ENCODE measurements at regions of chr15 and their contacts with region 1.

Region 1: DNA sequence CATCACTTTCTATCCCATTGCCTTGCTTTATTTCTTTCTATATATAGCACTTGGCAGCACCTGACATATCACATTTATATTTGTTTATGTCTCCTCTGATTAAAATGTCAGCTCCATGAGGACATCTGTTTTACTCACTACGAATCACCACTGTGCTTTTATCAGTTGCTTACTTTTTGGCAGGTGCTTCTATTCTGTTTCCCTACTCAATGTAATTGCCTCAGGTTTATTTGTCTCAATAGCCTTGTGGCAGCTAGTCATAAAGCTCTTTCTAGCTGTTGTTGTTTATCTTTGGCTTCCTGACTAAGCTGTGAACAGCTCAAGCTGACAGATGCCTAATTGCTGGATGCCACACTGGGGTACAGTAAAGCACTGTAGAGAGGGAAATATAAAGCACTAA is 85.5 kb downstream of the VPS13C start:
- DNase-seq: no peak
- ATAC-seq: peak; percentile 79
- H3K4me3 ChIP-seq: no peak overlapping the region
- H3K4me1 ChIP-seq: peaks cover 11% of the 10 kb centered on the region
- CTCF ChIP-seq: no peak

Region 2: DNA sequence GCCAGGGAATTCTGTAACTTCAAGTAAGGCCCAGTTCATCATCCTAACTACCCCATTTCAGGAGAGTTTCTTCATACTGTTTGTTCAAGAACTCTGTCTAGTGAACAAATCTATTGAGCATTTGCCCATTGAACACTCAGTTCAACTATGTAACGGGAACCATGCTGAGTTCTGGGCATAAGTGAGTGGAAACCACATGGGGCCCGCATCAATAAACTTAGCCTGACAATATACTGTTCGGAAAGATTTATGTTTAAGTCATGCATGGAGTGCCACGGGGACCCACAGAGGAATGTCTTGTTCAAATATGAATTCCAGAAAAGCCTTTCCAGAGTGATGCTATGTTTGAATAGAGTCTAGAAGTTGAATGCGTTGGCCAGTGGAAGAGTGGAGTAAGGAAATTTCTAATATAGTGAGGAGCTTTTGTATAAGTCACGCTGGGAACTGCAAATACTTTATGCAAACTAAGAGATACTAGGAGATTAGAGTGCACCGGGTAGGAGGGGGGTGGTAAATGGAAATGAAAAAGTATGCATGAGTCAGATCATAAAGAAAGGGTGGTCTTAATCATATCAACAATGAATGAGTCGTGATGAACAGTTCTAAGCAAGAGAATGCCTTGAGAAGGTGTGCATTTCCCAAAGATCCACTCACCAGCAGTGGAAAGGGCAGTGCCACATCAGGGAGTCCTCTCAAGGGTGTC is 194.3 kb before region 1 on chr15:
- intact Hi-C with region 1: no loop called
- DNase-seq: no peak
- ATAC-seq: no peak
- H3K4me3 ChIP-seq: no peak overlapping the region
- H3K4me1 ChIP-seq: no peaks in the 10 kb centered on the region
- CTCF ChIP-seq: no peak

Region 3: DNA sequence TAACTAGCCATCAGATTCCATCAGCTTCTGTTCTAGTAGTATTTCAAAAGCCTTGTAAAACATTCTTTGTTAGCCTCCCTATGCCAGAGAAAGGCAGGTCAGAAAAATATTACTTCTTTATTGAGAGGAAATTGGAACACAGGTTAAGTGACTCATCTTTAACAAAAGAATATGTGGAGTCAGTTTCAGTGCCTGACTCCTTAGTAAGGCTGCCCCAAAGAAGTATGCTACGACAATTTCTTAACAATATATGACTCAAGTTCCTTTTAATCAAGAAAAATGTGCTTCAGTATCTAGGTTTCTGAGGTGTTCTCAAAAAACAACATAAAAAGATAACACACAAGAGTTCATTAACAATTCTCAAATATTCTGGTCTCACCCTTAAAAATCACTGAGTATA is 53.7 kb before region 1 on chr15:
- intact Hi-C with region 1: loop called in 1 of 2 experiments (anchors 10 kb)
- DNase-seq: no peak
- ATAC-seq: no peak
- H3K4me3 ChIP-seq: no peak overlapping the region
- H3K4me1 ChIP-seq: no peaks in the 10 kb centered on the region
- CTCF ChIP-seq: no peak

Region 4: DNA sequence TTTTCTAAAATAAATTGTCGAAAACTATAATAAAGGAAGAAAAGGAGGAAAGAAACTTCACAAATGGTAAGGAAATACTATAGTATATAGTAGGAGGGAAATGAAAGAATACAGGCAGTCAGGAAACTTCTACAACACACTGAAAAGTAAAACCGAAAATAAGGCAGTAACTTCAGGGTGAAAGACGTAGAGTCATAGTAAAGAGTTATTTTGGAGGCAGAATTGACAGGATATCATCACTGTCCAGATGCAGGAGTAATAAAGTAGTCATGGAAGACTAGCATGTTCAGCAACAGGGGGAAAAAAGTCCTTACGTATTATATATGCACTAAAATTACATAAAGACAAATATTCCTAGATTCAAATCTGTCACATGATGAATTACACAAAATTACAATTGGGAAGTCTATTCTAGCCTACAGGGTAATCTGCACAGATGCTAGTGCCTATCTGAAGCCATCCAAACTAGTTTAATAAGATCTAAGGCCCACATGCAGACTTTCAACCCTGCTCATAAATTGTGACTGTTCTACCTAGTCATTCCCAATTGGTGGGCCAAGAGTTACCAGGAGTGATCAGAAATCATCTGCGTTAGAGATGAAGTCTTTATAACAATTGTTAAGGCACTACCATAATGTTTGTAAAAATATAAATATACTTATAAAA is 71.5 kb after region 1 on chr15:
- intact Hi-C with region 1: no loop called
- DNase-seq: no peak
- ATAC-seq: peak; percentile 42
- H3K4me3 ChIP-seq: no peak overlapping the region
- H3K4me1 ChIP-seq: peaks cover 5% of the 10 kb centered on the region
- CTCF ChIP-seq: no peak